OCI-LY7 (cell line): ENCODE measurements at regions of chr2 and their contacts with region 1.

Region 1: GRCh38 chr2:226799181-226799975 is at the start of gene IRS1:
- DNase-seq: peak; percentile 87
- H3K4me3 ChIP-seq: peak within 1 kb of the TSS; percentile 89
- H3K27ac ChIP-seq: peak within 1 kb of the TSS; percentile 85
- H3K4me1 ChIP-seq: peaks cover 44% of the 10 kb centered on the region
- CTCF ChIP-seq: no peak
- total RNA-seq, gene IRS1: 15.9 and 18.1 TPM in 2 replicates

Region 2: GRCh38 chr2:225464346-225465025 is 1334.9 kb before region 1 on chr2:
- CTCF ChIA-PET with region 1: no interaction called
- POLR2A ChIA-PET with region 1: no interaction called
- intact Hi-C with region 1: no loop called
- DNase-seq: no peak
- H3K4me3 ChIP-seq: no peak overlapping the region
- H3K27ac ChIP-seq: no peak overlapping the region
- H3K4me1 ChIP-seq: no peaks in the 10 kb centered on the region
- CTCF ChIP-seq: no peak

Region 3: GRCh38 chr2:225889446-225889850 is 909.9 kb before region 1 on chr2:
- CTCF ChIA-PET with region 1: interaction called, 4 read pairs
- POLR2A ChIA-PET with region 1: no interaction called
- intact Hi-C with region 1: loop called (anchors 2 kb)
- DNase-seq: peak; percentile 45
- H3K4me3 ChIP-seq: no peak overlapping the region
- H3K27ac ChIP-seq: no peak overlapping the region
- H3K4me1 ChIP-seq: no peaks in the 10 kb centered on the region
- CTCF ChIP-seq: peak; percentile 88

Region 4: DNA sequence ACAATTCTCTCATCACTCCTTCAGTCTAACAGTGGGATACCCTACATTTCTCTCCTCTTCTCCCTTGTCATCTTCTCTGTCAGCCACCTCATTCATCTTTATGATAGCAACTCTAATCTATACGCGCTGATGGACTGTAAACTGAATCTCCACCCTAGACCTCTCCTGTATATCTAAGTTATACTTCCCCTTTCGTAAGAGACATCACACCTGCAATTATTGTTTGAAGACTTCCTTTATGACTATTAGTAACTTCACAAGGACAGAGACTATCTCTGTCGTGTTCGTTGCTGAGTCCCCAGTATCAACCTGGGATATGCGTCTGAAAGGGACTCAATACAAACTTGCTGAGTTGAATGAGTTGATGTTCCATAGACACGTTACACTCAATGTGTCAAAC is 263.0 kb before region 1 on chr2:
- CTCF ChIA-PET with region 1: no interaction called
- POLR2A ChIA-PET with region 1: interaction called, 3 read pairs
- intact Hi-C with region 1: loop called (anchors 5 kb)
- DNase-seq: peak; percentile 60
- H3K4me3 ChIP-seq: no peak overlapping the region
- H3K27ac ChIP-seq: peak overlapping the region; percentile 16
- H3K4me1 ChIP-seq: peaks cover 16% of the 10 kb centered on the region
- CTCF ChIP-seq: no peak

Region 5: GRCh38 chr2:226743915-226744314 is 55.5 kb before region 1 on chr2:
- CTCF ChIA-PET with region 1: no interaction called
- POLR2A ChIA-PET with region 1: no interaction called
- intact Hi-C with region 1: no loop called
- DNase-seq: no peak
- H3K4me3 ChIP-seq: no peak overlapping the region
- H3K27ac ChIP-seq: no peak overlapping the region
- H3K4me1 ChIP-seq: no peaks in the 10 kb centered on the region
- CTCF ChIP-seq: no peak

Region 6: DNA sequence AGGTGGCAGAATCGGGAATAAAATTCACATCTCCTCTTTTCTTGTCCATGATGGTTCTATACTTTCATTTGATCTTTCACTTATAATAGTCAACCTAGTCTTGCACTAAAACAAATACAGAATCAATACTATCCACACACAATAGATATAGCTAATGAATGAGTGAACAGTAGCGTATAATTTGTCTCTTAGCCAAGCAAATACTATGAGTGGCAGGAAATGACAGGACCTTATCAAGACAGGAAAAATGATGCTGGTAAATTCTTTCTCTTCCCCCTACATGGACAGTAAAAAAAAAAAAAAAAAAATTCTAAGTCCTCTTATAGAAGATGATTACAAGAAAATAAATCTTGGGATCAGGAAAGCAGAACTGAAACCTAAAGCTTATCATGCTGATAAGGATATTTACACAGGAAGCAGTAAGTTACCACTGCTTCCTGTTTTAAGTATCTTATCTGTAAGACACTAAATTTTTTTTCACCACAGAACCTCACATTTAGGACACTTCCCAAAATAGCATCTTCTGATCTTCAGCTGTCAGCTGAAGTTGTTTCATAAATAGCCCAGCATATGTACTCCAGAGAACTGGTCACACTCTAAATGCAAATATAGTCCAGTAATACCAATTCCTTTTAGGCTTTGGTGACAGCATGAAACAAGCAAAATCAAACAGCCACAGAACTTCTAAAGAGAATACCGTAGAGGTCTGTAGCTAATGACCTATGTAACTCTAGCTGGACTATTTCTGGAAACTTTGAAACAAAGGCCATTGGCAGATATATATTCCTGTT is 26.8 kb before region 1 on chr2:
- CTCF ChIA-PET with region 1: interaction called, 19 read pairs
- POLR2A ChIA-PET with region 1: interaction called, 122 read pairs
- intact Hi-C with region 1: loop called (anchors 2 kb)
- DNase-seq: peak; percentile 95
- H3K4me3 ChIP-seq: peak overlapping the region; percentile 56
- H3K27ac ChIP-seq: peak overlapping the region; percentile 90
- H3K4me1 ChIP-seq: peaks cover 61% of the 10 kb centered on the region
- CTCF ChIP-seq: no peak

Region 7: GRCh38 chr2:226835796-226836547 is 36.6 kb after region 1 on chr2 and contains the start of gene RHBDD1:
- CTCF ChIA-PET with region 1: interaction called, 6 read pairs
- POLR2A ChIA-PET with region 1: interaction called, 10 read pairs
- intact Hi-C with region 1: loop called (anchors 1 kb)
- DNase-seq: peak; percentile 96
- H3K4me3 ChIP-seq: peak within 1 kb of the TSS; percentile 73
- H3K27ac ChIP-seq: peak within 1 kb of the TSS; percentile 97
- H3K4me1 ChIP-seq: peaks cover 53% of the 10 kb centered on the region
- CTCF ChIP-seq: no peak
- total RNA-seq, gene RHBDD1: 30.4 and 40.8 TPM in 2 replicates

Region 8: DNA sequence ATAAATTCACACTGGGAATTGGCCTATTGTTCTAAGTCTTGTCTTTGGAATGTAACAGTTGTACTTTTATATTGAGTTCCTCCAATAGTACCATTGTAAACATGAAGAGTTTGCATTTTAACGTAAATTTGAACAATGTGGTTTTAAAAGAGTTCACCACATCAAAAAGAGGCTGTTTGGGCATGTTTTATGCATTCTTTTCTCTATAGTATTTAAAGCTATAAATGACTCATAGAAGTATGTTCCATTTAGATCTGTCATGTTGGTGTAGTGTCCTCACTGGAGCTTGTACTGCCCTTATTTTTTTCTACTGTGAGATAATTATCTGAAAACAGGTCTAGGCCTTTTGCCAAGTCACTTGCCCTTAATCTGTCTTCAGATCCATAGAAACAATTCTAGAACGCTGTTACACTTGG is 178.4 kb after region 1 on chr2:
- CTCF ChIA-PET with region 1: interaction called, 11 read pairs
- POLR2A ChIA-PET with region 1: interaction called, 26 read pairs
- intact Hi-C with region 1: no loop called
- DNase-seq: no peak
- H3K4me3 ChIP-seq: no peak overlapping the region
- H3K27ac ChIP-seq: peak overlapping the region; percentile 10
- H3K4me1 ChIP-seq: peaks cover 82% of the 10 kb centered on the region
- CTCF ChIP-seq: no peak

Region 9: GRCh38 chr2:227117027-227117426 is 317.6 kb after region 1 on chr2:
- CTCF ChIA-PET with region 1: no interaction called
- POLR2A ChIA-PET with region 1: no interaction called
- intact Hi-C with region 1: no loop called
- DNase-seq: no peak
- H3K4me3 ChIP-seq: no peak overlapping the region
- H3K27ac ChIP-seq: no peak overlapping the region
- H3K4me1 ChIP-seq: no peaks in the 10 kb centered on the region
- CTCF ChIP-seq: no peak